Activated T-helper 1 cell treated with anti-CD3 and anti-CD28 coated beads, Interleukin-12 subunit alpha, Interleukin-12 subunit beta, Interleukin-2, Interleukin-4 antibody, amounts not matched to agents 30 ng/mL and 10 ng/mL and 1 ng/mL, durations not matched to agents 14 hours and 24 hours and 36 hours (primary cell): ENCODE measurements at regions of chr20 and their contacts with region 1.

Region 1: GRCh38 chr20:62136283-62137091 is 6.7 kb downstream of the PSMA7 start:
- DNase-seq: peak; percentile 49
- H3K4me3 Mint-ChIP-seq: no peak overlapping the region
- H3K27ac Mint-ChIP-seq: no peak overlapping the region
- H3K4me1 Mint-ChIP-seq: peaks cover 50% of the 10 kb centered on the region
- H3K27me3 Mint-ChIP-seq: no peaks in the 10 kb centered on the region

Region 2: GRCh38 chr20:62010551-62011402 is 125.7 kb before region 1 on chr20:
- intact Hi-C with region 1: loop called (anchors 1 kb)
- DNase-seq: peak; percentile 34
- H3K4me3 Mint-ChIP-seq: no peak overlapping the region
- H3K27ac Mint-ChIP-seq: no peak overlapping the region
- H3K4me1 Mint-ChIP-seq: peaks cover 8% of the 10 kb centered on the region
- H3K27me3 Mint-ChIP-seq: no peaks in the 10 kb centered on the region

Region 3: GRCh38 chr20:62025832-62026563 is 110.5 kb before region 1 on chr20:
- intact Hi-C with region 1: loop called (anchors 5 kb)
- DNase-seq: no peak
- H3K4me3 Mint-ChIP-seq: no peak overlapping the region
- H3K27ac Mint-ChIP-seq: peak overlapping the region; percentile 41
- H3K4me1 Mint-ChIP-seq: peaks cover 17% of the 10 kb centered on the region
- H3K27me3 Mint-ChIP-seq: no peaks in the 10 kb centered on the region

Region 4: DNA sequence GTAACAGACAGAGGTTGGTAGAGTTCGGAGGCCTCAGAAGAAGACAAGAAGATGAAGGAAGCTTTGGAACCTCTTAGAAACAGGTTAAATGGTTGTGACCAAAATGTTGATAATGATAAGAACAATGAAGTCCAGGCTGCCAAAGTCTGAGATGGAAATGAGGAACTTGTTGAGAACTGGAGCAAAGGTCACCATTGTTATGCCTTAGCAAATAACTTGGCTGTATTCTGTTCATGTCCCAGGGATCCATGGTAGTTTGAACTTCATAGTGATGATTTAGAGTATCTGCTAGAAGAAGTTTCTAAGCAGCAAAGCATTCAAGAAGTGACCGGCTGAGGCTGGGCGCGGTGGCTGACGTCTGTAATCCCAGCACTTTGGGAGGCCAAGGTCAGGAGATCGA is 25.3 kb before region 1 on chr20:
- intact Hi-C with region 1: no loop called
- DNase-seq: no peak
- H3K4me3 Mint-ChIP-seq: no peak overlapping the region
- H3K27ac Mint-ChIP-seq: no peak overlapping the region
- H3K4me1 Mint-ChIP-seq: no peaks in the 10 kb centered on the region
- H3K27me3 Mint-ChIP-seq: no peaks in the 10 kb centered on the region

Region 5: GRCh38 chr20:62219992-62220665 is 83.6 kb after region 1 on chr20 and contains the start of gene HRH3:
- intact Hi-C with region 1: no loop called
- DNase-seq: peak; percentile 47
- H3K4me3 Mint-ChIP-seq: peak within 1 kb of the TSS; percentile 15
- H3K27ac Mint-ChIP-seq: no peak within 1 kb of the TSS
- H3K4me1 Mint-ChIP-seq: no peaks in the 10 kb centered on the region
- H3K27me3 Mint-ChIP-seq: peaks cover 20% of the 10 kb centered on the region
- total RNA-seq, gene HRH3: not detected in 2 replicates